Ovary (tissue), 10 donors: ENCODE measurements at regions of chr5 and their contacts with region 1.

Region 1: GRCh38 chr5:128201065-128201926 is 117.7 kb downstream of the SLC12A2 start:
- DNase-seq: peak; percentile 74 to 90 (median 86)
- H3K4me3 ChIP-seq: peak overlapping the region; percentile 4
- H3K27ac ChIP-seq: no peak overlapping the region
- H3K4me1 ChIP-seq: peaks cover 7% of the 10 kb centered on the region
- H3K27me3 ChIP-seq: no peaks in the 10 kb centered on the region
- CTCF ChIP-seq: peak; percentile 80 to 90 (median 88)
- EP300 ChIP-seq: no peak
- POLR2A ChIP-seq: no peak

Region 2: DNA sequence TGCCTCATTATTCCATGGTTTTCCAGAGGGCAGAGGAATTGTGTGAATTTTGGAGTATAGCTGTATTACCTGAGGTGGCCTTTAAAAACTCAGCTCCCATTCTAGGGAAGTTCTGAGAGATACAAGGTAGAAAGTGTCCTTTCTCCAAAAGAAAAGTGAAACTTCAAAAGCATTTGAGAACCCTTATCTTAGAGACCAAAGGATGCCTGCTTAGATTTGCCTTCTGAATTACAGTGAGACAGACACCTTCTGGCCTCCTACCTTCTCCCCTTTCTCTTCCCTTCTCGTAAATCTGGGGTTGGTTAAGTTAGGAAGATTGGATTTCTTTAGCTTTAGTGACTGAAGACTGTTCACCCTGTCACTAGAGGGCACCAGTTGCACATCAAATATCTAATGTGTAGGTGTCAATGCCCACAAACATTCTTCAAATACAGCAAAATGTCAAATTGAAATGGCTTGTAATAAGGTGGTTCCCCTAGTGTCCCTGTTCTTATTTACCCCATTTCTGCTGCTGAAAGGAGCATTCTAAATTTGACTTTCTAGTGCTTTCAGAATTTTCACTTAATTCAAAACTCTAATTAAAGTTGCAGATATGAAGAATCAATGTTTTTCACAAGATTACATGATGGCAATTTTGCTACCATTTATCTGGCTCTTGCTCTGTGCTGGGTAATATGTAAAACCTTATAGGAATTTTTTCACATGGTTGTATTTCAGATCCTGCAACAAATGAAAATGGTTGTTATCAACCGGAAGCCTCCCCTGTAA is 637.1 kb before region 1 on chr5:
- intact Hi-C with region 1: loop called (anchors 5 to 10 kb)
- DNase-seq: peak in 3 of 5 donors; percentile 40 to 60 (median 47)
- H3K4me3 ChIP-seq: no peak overlapping the region
- H3K27ac ChIP-seq: no peak overlapping the region
- H3K4me1 ChIP-seq: no peaks in the 10 kb centered on the region
- H3K27me3 ChIP-seq: no peaks in the 10 kb centered on the region
- CTCF ChIP-seq: peak in 2 of 3 donors; percentile 60 to 69
- EP300 ChIP-seq: no peak
- POLR2A ChIP-seq: no peak

Region 3: DNA sequence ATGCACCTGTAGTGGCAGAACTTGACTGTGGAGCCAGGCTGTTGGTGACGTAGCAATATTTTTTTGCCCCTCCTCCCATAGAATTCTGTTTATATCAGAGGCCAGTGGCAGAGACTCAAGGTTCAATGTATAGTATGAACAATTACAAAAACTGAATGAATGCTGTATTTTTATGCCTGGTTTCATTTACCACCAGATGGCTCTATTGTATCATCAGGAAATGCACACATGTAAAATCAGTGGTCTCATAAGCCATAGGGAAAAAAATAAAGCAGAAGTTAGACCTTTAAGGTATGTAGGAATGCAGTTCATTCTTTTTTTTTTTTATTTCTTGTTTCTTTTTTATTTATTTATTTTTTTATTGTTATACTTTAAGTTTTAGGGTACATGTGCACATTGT is 454.5 kb before region 1 on chr5:
- intact Hi-C with region 1: loop called in 2 of 4 experiments (anchors 10 kb)
- DNase-seq: no peak
- H3K4me3 ChIP-seq: no peak overlapping the region
- H3K27ac ChIP-seq: no peak overlapping the region
- H3K4me1 ChIP-seq: no peaks in the 10 kb centered on the region
- H3K27me3 ChIP-seq: no peaks in the 10 kb centered on the region
- CTCF ChIP-seq: peak in 2 of 3 donors; percentile 31 to 39
- EP300 ChIP-seq: no peak
- POLR2A ChIP-seq: no peak

Region 4: DNA sequence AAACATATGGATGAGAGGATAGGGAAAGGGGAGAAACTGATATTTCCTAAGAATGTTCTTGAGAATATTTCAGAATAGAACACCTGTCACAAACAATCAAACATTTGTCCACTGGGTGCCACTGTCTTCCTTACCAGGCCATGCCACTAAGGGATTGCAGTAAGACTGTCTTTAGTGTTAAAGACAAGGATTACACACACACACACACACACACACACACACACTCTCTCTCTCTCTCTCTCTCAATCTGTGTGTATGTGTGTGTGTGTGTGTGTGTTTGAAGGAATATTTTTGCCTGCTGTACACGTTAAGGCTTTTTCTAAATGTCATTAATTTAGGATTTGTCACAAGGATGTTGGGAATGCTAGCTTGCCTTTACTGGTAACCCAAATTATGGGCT is 443.7 kb before region 1 on chr5:
- intact Hi-C with region 1: loop called in 1 of 4 experiments (anchors 10 kb)
- DNase-seq: no peak
- H3K4me3 ChIP-seq: no peak overlapping the region
- H3K27ac ChIP-seq: no peak overlapping the region
- H3K4me1 ChIP-seq: peaks cover 5% of the 10 kb centered on the region
- H3K27me3 ChIP-seq: no peaks in the 10 kb centered on the region
- CTCF ChIP-seq: peak in 1 of 3 donors; percentile 20
- EP300 ChIP-seq: no peak
- POLR2A ChIP-seq: no peak

Region 5: DNA sequence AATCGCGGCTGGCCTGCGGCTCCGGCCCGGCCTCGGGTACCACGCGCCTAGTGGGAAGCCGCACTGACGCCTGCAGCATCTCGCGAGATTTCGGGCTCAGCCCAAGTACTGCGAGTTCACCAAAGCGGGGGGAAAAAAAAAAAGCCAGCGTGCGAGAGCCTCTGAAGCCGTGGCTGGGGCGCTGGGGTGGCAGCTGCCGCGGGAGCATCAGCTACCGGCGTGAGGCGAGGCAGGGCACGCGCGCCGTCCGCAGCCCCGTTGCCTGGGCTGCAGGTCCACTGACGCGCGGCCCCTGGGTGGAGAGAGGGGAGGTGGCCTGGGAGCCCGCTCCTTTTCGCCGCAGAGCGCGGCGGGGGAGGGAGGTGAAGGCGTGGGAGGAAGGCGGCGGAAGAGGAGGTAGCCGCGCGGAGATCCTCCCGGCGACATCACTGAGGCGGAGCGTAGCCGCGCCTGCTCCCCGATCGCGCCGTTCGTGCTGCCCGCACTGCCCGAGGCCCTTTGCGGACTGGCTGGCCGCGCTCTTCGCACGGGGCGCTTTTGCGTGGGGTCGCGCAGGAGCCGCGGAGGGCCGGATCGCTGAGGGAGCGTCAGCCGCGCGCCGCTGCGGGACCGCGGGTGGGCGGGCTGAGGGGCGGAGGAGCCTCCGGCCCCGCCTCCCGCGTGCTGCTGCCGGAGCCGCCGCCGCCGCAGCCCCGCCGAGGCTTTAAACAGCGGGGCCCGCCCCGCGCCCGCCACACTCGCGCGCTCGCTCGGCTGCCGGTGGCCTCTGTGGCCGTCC is 118.1 kb before region 1 on chr5 and contains the start of gene SLC12A2:
- intact Hi-C with region 1: loop called in 1 of 4 experiments (anchors 10 kb)
- DNase-seq: peak; percentile 92 to 95 (median 93)
- H3K4me3 ChIP-seq: peak within 1 kb of the TSS; percentile 87
- H3K27ac ChIP-seq: peak within 1 kb of the TSS; percentile 86 to 99
- H3K4me1 ChIP-seq: peaks cover 4% of the 10 kb centered on the region
- H3K27me3 ChIP-seq: no peaks in the 10 kb centered on the region
- CTCF ChIP-seq: peak in 1 of 3 donors; percentile 6
- EP300 ChIP-seq: no peak
- POLR2A ChIP-seq: peak; percentile 57
- total RNA-seq, gene SLC12A2: 15.6 to 31.6 (median 20.8) TPM